Activated T-helper 1 cell treated with anti-CD3 and anti-CD28 coated beads, Interleukin-12 subunit alpha, Interleukin-12 subunit beta, Interleukin-2, Interleukin-4 antibody, amounts not matched to agents 30 ng/mL and 10 ng/mL and 1 ng/mL, durations not matched to agents 14 hours and 24 hours and 36 hours (primary cell): ENCODE measurements at regions of chr16 and their contacts with region 1.

Region 1: DNA sequence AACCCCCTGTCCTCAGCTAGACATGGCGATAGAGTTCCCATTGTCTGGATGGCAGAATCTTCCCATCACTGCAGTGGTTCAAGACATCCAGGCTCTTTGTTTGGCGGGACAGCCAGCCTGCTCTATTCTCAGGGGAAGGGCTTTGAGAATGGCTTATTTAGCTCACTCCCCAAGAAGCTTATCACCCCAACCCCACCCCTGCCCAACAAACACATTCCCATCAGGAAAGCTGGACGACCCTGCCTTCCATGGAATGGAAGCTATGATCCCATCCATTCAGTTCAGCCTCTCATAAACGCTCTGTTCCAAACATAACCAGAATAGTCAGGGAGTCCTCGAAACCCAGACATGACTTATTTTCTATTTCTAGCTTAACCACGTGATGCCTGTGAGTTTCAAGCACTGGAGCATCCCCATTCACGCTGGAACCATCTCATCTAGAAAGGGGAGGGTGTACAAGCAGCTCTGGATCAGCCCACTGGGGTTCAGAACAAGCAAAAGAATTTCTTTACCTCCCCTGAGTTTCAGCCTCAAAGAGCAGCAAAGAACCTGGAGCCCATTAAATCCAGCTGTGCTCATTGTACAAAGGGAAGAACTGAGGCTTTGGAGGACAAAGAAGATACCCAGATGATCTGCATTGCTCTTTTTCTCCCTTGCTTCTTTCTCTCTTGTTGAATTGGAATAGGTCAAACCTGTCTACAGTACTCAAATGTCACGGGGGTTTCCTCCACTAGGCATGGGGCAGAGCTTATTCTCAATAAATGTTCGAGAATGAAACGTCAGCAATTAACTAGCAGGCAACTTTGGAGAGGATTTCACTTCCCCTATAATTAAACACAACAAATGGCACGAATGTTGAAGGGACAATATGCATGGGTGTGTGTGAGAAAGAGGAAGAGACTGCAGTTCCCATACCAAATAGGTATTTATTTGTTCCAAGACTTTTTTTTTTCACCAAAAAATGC is 93.1 kb downstream of the XYLT1 start:
- DNase-seq: no peak
- H3K4me3 Mint-ChIP-seq: no peak overlapping the region
- H3K27ac Mint-ChIP-seq: peak overlapping the region; percentile 33
- H3K4me1 Mint-ChIP-seq: peaks cover 59% of the 10 kb centered on the region
- H3K27me3 Mint-ChIP-seq: no peaks in the 10 kb centered on the region

Region 2: DNA sequence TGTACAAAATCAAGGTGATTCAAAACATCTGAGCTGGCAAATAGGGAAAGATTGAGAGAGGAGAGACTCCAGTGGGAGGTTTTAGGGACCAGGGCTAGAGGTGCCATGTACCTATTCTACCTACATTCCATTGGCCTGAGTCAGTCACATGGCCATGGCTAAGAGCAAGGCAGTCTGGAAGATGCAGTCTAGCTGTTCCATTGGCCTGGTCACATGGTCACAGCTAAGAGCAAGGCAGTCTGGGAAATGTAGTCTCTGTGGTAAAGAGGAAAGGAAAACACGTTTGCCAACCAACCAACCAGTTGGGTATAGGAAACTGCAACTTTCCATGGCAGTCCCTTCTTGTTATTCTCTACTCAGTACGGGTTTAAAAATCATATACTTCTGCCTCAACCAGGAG is 276.0 kb before region 1 on chr16:
- intact Hi-C with region 1: no loop called
- DNase-seq: no peak
- H3K4me3 Mint-ChIP-seq: no peak overlapping the region
- H3K27ac Mint-ChIP-seq: no peak overlapping the region
- H3K4me1 Mint-ChIP-seq: peaks cover 6% of the 10 kb centered on the region
- H3K27me3 Mint-ChIP-seq: no peaks in the 10 kb centered on the region

Region 3: DNA sequence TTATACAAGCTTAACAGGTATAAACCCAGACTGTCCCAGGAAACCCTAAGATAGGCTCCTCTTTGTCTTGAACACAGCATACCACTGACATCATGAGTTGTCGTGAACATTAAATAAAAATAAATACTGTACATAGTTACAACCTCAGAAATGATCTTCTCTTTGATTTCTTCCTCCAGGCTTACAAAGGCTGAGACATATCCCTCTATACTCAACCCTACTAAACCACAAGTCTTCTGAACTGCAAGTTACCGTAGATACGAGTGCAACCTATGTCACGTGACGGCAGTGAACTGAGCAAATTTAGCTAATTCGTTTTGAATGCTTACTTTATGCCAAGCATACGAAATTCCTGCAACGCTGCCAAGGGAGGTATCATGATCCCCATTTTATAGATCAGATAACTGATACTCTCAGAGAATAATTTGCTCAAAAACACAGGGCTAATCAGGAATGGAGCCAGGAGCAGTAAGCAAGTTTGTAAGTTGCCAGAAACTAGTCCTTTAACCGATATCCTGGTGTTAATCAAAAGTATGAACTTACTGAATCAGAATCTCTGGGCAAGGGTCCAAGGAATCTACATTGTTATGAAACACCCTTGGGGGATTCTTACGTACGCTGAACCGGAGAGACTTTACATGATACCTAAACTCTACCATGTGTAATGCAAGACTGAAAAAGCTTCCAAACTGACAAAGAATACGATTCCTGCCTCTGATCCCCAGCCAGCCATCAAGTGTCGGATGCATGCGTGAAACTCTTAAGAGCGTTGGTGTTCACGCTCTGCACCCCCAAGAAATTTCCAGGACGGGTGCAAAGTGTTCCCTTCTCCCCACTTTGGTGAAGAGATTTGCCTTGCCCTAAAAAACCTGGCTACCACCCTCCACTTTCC is 13.1 kb before region 1 on chr16:
- intact Hi-C with region 1: loop called (anchors 2 kb)
- DNase-seq: peak; percentile 57
- H3K4me3 Mint-ChIP-seq: peak overlapping the region; percentile 34
- H3K27ac Mint-ChIP-seq: peak overlapping the region; percentile 59
- H3K4me1 Mint-ChIP-seq: peaks cover 97% of the 10 kb centered on the region
- H3K27me3 Mint-ChIP-seq: no peaks in the 10 kb centered on the region

Region 4: DNA sequence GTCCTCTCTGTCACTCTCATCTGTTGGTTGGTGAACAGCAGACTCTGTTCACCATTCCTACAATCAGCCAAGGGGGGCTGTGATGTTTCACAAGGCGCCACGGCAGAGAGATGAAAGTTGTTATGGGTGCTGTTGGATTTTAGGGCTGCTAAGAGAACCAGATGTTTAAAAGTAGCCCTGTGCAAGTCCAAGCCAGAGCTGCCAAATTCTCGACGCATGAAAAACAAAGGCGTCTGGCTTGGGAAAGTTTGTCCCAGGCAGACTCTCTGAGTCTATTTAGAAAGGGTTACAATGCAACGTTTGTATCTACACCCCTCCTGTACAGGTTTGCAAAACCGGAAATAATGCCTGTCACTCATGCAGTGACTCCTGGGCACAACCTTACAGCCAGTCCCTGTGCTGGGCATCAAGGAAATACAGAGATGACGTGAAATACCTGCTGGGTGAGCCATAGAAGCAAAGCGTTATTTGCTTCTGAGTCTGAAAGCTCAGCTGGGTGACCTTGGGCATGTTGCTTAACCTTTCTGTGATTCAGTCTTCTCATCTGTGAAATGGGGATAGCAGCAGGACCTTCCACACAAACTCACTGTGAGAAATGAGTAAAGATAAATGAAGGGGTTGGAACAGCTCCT is 18.3 kb after region 1 on chr16:
- intact Hi-C with region 1: loop called (anchors 2 kb)
- DNase-seq: no peak
- H3K4me3 Mint-ChIP-seq: no peak overlapping the region
- H3K27ac Mint-ChIP-seq: no peak overlapping the region
- H3K4me1 Mint-ChIP-seq: peaks cover 32% of the 10 kb centered on the region
- H3K27me3 Mint-ChIP-seq: no peaks in the 10 kb centered on the region

Region 5: DNA sequence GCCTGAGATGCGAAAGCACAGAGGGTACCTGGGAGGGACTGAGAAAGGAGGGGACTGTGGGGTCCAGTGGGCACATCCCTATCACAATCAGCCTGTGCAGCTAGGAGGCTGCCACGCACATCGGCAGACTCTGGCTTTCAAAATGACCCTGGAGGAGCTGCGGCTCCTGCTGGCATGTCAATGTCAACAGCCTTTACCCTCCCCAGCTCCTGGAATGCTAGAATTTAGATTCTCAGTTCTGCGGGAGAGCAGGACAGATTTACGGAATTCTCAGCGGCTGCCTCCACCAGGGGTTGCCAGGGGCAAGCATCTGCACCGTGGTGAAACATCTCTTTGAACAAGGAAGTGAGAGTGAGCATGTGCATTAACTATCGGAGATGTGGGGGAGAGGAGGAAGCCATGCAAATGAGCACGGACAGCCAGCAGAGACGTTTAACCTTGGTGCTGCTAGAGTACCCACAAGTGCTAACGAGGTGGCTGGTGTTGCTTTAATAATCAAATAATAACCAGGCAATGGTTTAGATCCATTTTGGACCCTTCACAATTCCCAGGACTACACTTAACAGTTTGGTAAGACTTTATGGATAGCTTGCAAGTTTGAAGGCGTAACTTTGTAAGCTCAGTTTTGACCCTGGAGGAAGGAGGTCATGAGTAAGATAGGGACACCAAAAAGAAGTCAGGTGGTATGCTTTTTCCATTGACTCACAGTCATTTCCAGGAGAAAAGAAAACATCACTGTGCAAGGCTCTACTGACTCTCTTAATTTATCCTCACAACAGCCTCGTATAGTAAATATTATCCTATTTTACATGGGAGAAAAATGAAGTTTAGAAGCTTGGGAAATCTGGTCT is 39.0 kb after region 1 on chr16:
- intact Hi-C with region 1: loop called (anchors 1 kb)
- DNase-seq: peak; percentile 40
- H3K4me3 Mint-ChIP-seq: peak overlapping the region; percentile 82
- H3K27ac Mint-ChIP-seq: peak overlapping the region; percentile 97
- H3K4me1 Mint-ChIP-seq: peaks cover 46% of the 10 kb centered on the region
- H3K27me3 Mint-ChIP-seq: no peaks in the 10 kb centered on the region

Region 6: DNA sequence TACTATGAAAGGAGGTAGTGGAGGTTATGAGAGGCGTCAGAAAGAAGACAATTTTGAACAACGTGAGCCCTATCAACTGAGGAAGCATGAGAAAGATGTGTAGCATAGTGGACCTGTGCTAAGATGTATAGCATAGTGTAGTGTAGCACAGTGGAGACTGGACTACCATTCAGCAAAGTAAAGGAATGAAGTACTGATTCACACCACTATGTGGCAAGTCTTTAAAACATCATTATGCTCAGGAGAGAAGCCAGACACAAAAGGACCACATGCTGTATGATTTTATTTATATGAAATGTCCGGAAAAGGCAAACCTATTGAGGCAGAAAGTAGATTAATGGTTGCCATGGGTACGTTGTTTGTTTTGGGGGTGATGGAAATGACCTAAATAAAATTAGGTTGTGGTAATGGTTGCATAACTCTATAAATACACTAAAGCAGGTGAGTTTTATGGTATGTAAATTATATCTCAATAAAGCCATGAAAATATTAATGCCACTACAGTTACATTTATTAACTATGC is 113.6 kb after region 1 on chr16:
- intact Hi-C with region 1: no loop called
- DNase-seq: no peak
- H3K4me3 Mint-ChIP-seq: no peak overlapping the region
- H3K27ac Mint-ChIP-seq: no peak overlapping the region
- H3K4me1 Mint-ChIP-seq: no peaks in the 10 kb centered on the region
- H3K27me3 Mint-ChIP-seq: peaks cover 20% of the 10 kb centered on the region